ENCODE measurements at regions of chr4 and their contacts with region 1.

Region 1: GRCh38 chr4:17544831-17545234 is 29.9 kb downstream of the CLRN2 start:
- DNase-seq: peak in 1 of 5 donors; percentile 26
- H3K4me3 ChIP-seq: no peak overlapping the region
- H3K27ac ChIP-seq: no peak overlapping the region
- H3K4me1 ChIP-seq: no peaks in the 10 kb centered on the region
- H3K27me3 ChIP-seq: no peaks in the 10 kb centered on the region
- CTCF ChIP-seq: no peak

Region 2: GRCh38 chr4:17636696-17637622 is 92.1 kb after region 1 on chr4:
- intact Hi-C with region 1: loop called (anchors 5 kb)
- DNase-seq: peak; percentile 73 to 85 (median 77)
- H3K4me3 ChIP-seq: no peak overlapping the region
- H3K27ac ChIP-seq: no peak overlapping the region
- H3K4me1 ChIP-seq: no peaks in the 10 kb centered on the region
- H3K27me3 ChIP-seq: no peaks in the 10 kb centered on the region
- CTCF ChIP-seq: peak; percentile 83

Measured in kidney (tissue), 22 donors.